ENCODE measurements at regions of chr4 and their contacts with region 1.

Region 1: GRCh38 chr4:101347557-101348366 is 436 bp upstream of the PPP3CA start:
- DNase-seq: peak; percentile 98 to 100 (median 99)
- ATAC-seq: peak; percentile 85
- H3K4me3 ChIP-seq: peak overlapping the region; percentile 96 to 99
- H3K4me3 Mint-ChIP-seq: peak overlapping the region; percentile 98
- H3K27ac ChIP-seq: peak overlapping the region; percentile 71 to 82
- H3K27ac Mint-ChIP-seq: peak overlapping the region; percentile 94
- H3K4me1 ChIP-seq: peaks cover 10% of the 10 kb centered on the region
- H3K4me1 Mint-ChIP-seq: peaks cover 33% of the 10 kb centered on the region
- H3K27me3 ChIP-seq: peaks cover 0 to 3% of the 10 kb centered on the region in 2 experiments
- H3K27me3 Mint-ChIP-seq: peaks cover 15% of the 10 kb centered on the region
- CTCF ChIP-seq: no peak

Region 2: GRCh38 chr4:100462206-100462605 is 885.6 kb before region 1 on chr4:
- CTCF ChIA-PET with region 1: no interaction called
- POLR2A ChIA-PET with region 1: no interaction called
- intact Hi-C with region 1: no loop called
- DNase-seq: no peak
- ATAC-seq: no peak
- H3K4me3 ChIP-seq: no peak overlapping the region
- H3K4me3 Mint-ChIP-seq: no peak overlapping the region
- H3K27ac ChIP-seq: no peak overlapping the region
- H3K27ac Mint-ChIP-seq: no peak overlapping the region
- H3K4me1 ChIP-seq: peaks cover 14% of the 10 kb centered on the region
- H3K4me1 Mint-ChIP-seq: peaks cover 17% of the 10 kb centered on the region
- H3K27me3 ChIP-seq: no peaks in the 10 kb centered on the region
- H3K27me3 Mint-ChIP-seq: no peaks in the 10 kb centered on the region
- CTCF ChIP-seq: no peak

Region 3: GRCh38 chr4:101020956-101021355 is 326.8 kb before region 1 on chr4:
- CTCF ChIA-PET with region 1: interaction called, 3 read pairs
- POLR2A ChIA-PET with region 1: interaction called, 4 read pairs
- intact Hi-C with region 1: loop called (anchors 2 to 10 kb)
- DNase-seq: peak in 2 of 9 experiments; percentile 59 to 73
- ATAC-seq: peak; percentile 72
- H3K4me3 ChIP-seq: no peak overlapping the region
- H3K4me3 Mint-ChIP-seq: peak overlapping the region; percentile 47
- H3K27ac ChIP-seq: peak overlapping the region; percentile 15 to 56
- H3K27ac Mint-ChIP-seq: peak overlapping the region; percentile 90
- H3K4me1 ChIP-seq: peaks cover 29% of the 10 kb centered on the region
- H3K4me1 Mint-ChIP-seq: peaks cover 35% of the 10 kb centered on the region
- H3K27me3 ChIP-seq: no peaks in the 10 kb centered on the region
- H3K27me3 Mint-ChIP-seq: no peaks in the 10 kb centered on the region
- CTCF ChIP-seq: no peak

Region 4: GRCh38 chr4:101288365-101289145 is 59.2 kb before region 1 on chr4:
- CTCF ChIA-PET with region 1: no interaction called
- POLR2A ChIA-PET with region 1: no interaction called
- intact Hi-C with region 1: loop called (anchors 5 kb)
- DNase-seq: no peak
- ATAC-seq: no peak
- H3K4me3 ChIP-seq: no peak overlapping the region
- H3K4me3 Mint-ChIP-seq: no peak overlapping the region
- H3K27ac ChIP-seq: no peak overlapping the region
- H3K27ac Mint-ChIP-seq: no peak overlapping the region
- H3K4me1 ChIP-seq: no peaks in the 10 kb centered on the region
- H3K4me1 Mint-ChIP-seq: peaks cover 54% of the 10 kb centered on the region
- H3K27me3 ChIP-seq: no peaks in the 10 kb centered on the region
- H3K27me3 Mint-ChIP-seq: no peaks in the 10 kb centered on the region
- CTCF ChIP-seq: no peak

Region 5: GRCh38 chr4:102344954-102345794 is 997.4 kb after region 1 on chr4 and contains the start of gene SLC39A8:
- CTCF ChIA-PET with region 1: no interaction called
- POLR2A ChIA-PET with region 1: interaction called, 3 read pairs
- intact Hi-C with region 1: loop called (anchors 1 to 10 kb)
- DNase-seq: peak; percentile 67 to 94 (median 84)
- ATAC-seq: peak; percentile 80
- H3K4me3 ChIP-seq: peak within 1 kb of the TSS; percentile 65 to 85
- H3K4me3 Mint-ChIP-seq: peak within 1 kb of the TSS; percentile 92
- H3K27ac ChIP-seq: peak within 1 kb of the TSS; percentile 92 to 96
- H3K27ac Mint-ChIP-seq: peak within 1 kb of the TSS; percentile 96
- H3K4me1 ChIP-seq: peaks cover 33% of the 10 kb centered on the region
- H3K4me1 Mint-ChIP-seq: peaks cover 54% of the 10 kb centered on the region
- H3K27me3 ChIP-seq: no peaks in the 10 kb centered on the region
- H3K27me3 Mint-ChIP-seq: no peaks in the 10 kb centered on the region
- CTCF ChIP-seq: peak; percentile 90
- total RNA-seq, gene SLC39A8: 19.1 to 20.0 TPM

Region 6: GRCh38 chr4:103019308-103020124 is 1671.8 kb after region 1 on chr4 and contains the start of gene SLC9B1:
- CTCF ChIA-PET with region 1: no interaction called
- POLR2A ChIA-PET with region 1: no interaction called
- intact Hi-C with region 1: loop called in 1 of 2 experiments (anchors 5 kb)
- DNase-seq: peak; percentile 86 to 96 (median 94)
- ATAC-seq: peak; percentile 92
- H3K4me3 ChIP-seq: peak within 1 kb of the TSS; percentile 70 to 75
- H3K4me3 Mint-ChIP-seq: peak within 1 kb of the TSS; percentile 87
- H3K27ac ChIP-seq: peak within 1 kb of the TSS; percentile 86 to 87
- H3K27ac Mint-ChIP-seq: peak within 1 kb of the TSS; percentile 97
- H3K4me1 ChIP-seq: peaks cover 17% of the 10 kb centered on the region
- H3K4me1 Mint-ChIP-seq: peaks cover 20% of the 10 kb centered on the region
- H3K27me3 ChIP-seq: no peaks in the 10 kb centered on the region
- H3K27me3 Mint-ChIP-seq: no peaks in the 10 kb centered on the region
- CTCF ChIP-seq: no peak
- total RNA-seq, gene SLC9B1: 1.7 to 4.0 TPM

Measured in CD8-positive, alpha-beta T cell (primary cell).